Heart left ventricle (tissue), 16 donors: ENCODE measurements at regions of chr2 and their contacts with region 1.

Region 1: DNA sequence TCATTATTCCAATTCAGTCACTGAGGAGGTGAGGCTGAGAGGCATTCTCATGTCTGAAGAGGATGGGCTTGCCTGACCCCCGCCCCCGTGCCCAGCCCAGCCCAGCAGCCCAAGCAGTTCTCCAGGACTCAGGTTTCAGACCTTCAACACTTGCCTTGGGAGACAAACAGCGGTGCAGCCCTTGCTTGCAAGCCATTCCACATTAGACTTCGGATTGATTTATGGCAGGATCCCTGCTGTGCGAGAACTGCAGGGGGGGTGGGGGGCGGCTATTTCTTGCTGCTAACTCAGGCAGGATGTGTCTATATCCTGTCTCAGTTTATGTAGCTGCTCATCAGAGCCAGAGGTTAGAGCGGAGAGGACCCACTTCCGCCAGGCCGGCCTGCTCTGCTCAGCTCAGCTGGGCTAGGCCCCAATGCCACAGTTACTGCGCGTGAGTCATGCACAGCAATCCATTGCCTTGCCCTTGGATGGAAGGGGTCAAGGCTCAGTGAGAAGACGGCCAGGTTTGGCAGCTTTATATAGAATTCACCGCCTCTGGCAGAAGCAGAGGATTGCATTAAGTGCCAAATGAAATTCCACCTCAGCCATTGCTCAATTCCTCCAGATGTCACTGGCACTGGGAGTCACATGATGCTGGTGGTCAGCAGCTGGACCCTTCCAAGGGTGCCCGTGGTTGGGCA is 1.8 kb downstream of the GYPC start:
- DNase-seq: peak; percentile 77 to 95 (median 90)
- ATAC-seq: peak; percentile 62 to 86 (median 79)
- H3K4me3 ChIP-seq: peak overlapping the region; percentile 67 to 94 (median 77)
- H3K27ac ChIP-seq: peak overlapping the region; percentile 96 to 100 (median 98)
- H3K4me1 ChIP-seq: peaks cover 17 to 74% (median 70%) of the 10 kb centered on the region in 12 donors
- H3K27me3 ChIP-seq: no peaks in the 10 kb centered on the region
- CTCF ChIP-seq: peak in 1 of 12 donors; percentile 21
- POLR2A ChIP-seq: peak in 1 of 2 donors; percentile 61

Region 2: DNA sequence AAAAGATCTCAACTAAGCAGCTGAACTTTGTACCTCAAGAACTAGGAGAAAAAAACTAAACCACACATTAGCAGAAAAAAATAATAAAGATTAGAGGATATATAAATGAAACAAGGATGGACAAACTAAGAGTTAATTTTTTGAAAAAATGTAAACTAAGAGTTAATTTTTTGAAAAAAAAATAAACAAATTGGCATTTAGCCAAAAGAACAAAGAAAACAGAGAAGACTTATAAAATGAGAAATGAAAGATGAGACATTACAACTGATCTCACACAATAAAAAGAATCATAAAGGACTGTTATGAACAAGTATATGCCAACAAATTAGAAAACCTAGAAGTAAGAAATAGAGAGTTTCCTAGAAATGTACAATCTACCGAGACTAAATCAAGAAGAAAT is 861.0 kb before region 1 on chr2:
- intact Hi-C with region 1: no loop called
- DNase-seq: no peak
- ATAC-seq: no peak
- H3K4me3 ChIP-seq: no peak overlapping the region
- H3K27ac ChIP-seq: no peak overlapping the region
- H3K4me1 ChIP-seq: no peaks in the 10 kb centered on the region
- H3K27me3 ChIP-seq: no peaks in the 10 kb centered on the region
- CTCF ChIP-seq: no peak
- POLR2A ChIP-seq: no peak

Region 3: GRCh38 chr2:126527836-126528507 is 129.8 kb before region 1 on chr2:
- intact Hi-C with region 1: loop called in 5 of 10 experiments (anchors 2 to 10 kb)
- DNase-seq: peak; percentile 62 to 83 (median 71)
- ATAC-seq: peak in 3 of 4 donors; percentile 71 to 88 (median 84)
- H3K4me3 ChIP-seq: no peak overlapping the region
- H3K27ac ChIP-seq: no peak overlapping the region
- H3K4me1 ChIP-seq: no peaks in the 10 kb centered on the region
- H3K27me3 ChIP-seq: no peaks in the 10 kb centered on the region
- CTCF ChIP-seq: peak; percentile 53 to 79 (median 68)
- POLR2A ChIP-seq: no peak

Region 4: DNA sequence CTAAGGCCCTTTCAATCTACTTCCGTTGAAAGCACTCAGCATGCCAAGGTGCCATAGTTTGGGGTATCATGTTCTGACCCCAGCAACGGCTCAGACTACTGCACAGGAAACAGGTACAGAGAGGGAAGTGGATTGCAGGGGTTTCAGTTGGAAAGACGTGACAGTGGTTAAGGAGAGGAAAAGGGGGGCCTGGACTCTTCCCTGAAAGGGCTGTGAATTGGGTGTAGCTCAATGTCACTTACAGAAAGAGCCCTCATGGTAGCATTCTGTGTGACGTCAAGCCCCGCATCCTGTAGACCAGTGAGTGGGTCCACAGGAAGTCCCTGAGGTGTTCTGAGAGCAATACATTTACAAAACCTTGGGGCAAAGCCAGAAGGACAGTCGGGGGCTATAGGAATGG is 123.3 kb before region 1 on chr2:
- intact Hi-C with region 1: loop called in 6 of 10 experiments (anchors 2 to 10 kb)
- DNase-seq: peak in 4 of 5 donors; percentile 40 to 64 (median 46)
- ATAC-seq: peak; percentile 39 to 97 (median 72)
- H3K4me3 ChIP-seq: no peak overlapping the region
- H3K27ac ChIP-seq: peak overlapping the region in 7 of 12 donors; percentile 37 to 65 (median 39)
- H3K4me1 ChIP-seq: peaks cover 0 to 17% (median 0%) of the 10 kb centered on the region in 12 donors
- H3K27me3 ChIP-seq: no peaks in the 10 kb centered on the region
- CTCF ChIP-seq: no peak
- POLR2A ChIP-seq: no peak

Region 5: GRCh38 chr2:126586317-126586716 is 71.5 kb before region 1 on chr2:
- intact Hi-C with region 1: loop called in 3 of 10 experiments (anchors 2 to 5 kb)
- DNase-seq: peak in 4 of 5 donors; percentile 46 to 59 (median 50)
- ATAC-seq: peak; percentile 84 to 98 (median 90)
- H3K4me3 ChIP-seq: no peak overlapping the region
- H3K27ac ChIP-seq: peak overlapping the region in 11 of 12 donors; percentile 8 to 81 (median 71)
- H3K4me1 ChIP-seq: peaks cover 0 to 14% (median 0%) of the 10 kb centered on the region in 12 donors
- H3K27me3 ChIP-seq: no peaks in the 10 kb centered on the region
- CTCF ChIP-seq: no peak
- POLR2A ChIP-seq: no peak

Region 6: DNA sequence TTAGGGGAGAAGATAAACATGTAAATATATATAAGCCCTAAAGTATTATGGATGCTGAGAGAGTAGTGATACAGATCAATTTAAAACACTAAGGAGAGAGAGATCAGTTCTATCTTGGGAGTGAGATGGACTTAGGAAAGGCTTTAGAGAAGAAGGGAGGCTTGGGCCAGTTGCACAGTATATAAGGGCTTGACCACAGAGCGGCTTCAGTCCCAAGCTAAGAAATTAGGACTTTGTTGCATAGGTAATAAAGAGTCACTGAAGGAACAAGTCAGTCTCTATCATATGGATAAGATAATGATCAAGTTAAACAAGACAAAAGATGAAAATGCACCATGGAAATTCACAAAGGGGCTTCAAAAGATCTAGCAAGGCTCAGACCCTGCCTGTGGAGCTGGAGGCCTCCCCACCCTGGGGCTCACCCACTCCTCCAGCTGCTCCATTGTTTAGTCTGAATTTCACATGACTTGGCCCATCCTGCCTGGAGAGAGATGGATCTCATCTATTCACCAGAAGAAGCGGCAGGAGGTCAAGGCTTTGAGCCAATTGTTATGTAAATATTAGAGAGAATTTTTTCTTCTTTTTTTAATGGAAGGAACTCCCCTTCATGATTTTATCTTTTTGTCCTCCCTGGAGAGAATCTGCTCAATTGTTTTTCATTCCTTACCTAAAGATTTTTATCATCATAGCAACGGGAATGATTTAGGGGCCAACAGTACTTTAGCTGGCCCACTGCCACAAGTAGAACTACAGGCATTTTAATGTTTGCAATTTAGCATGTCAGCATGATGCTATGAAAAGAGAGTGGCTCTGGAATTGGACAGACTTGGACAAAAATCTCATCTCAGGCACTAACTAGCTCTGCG is 42.2 kb after region 1 on chr2:
- intact Hi-C with region 1: loop called in 7 of 10 experiments (anchors 2 to 5 kb)
- DNase-seq: peak in 2 of 5 donors; percentile 41 to 47
- ATAC-seq: peak in 2 of 4 donors; percentile 32 to 77
- H3K4me3 ChIP-seq: no peak overlapping the region
- H3K27ac ChIP-seq: peak overlapping the region in 11 of 12 donors; percentile 12 to 78 (median 64)
- H3K4me1 ChIP-seq: peaks cover 2 to 77% (median 38%) of the 10 kb centered on the region in 12 donors
- H3K27me3 ChIP-seq: no peaks in the 10 kb centered on the region
- CTCF ChIP-seq: no peak
- POLR2A ChIP-seq: no peak

Region 7: DNA sequence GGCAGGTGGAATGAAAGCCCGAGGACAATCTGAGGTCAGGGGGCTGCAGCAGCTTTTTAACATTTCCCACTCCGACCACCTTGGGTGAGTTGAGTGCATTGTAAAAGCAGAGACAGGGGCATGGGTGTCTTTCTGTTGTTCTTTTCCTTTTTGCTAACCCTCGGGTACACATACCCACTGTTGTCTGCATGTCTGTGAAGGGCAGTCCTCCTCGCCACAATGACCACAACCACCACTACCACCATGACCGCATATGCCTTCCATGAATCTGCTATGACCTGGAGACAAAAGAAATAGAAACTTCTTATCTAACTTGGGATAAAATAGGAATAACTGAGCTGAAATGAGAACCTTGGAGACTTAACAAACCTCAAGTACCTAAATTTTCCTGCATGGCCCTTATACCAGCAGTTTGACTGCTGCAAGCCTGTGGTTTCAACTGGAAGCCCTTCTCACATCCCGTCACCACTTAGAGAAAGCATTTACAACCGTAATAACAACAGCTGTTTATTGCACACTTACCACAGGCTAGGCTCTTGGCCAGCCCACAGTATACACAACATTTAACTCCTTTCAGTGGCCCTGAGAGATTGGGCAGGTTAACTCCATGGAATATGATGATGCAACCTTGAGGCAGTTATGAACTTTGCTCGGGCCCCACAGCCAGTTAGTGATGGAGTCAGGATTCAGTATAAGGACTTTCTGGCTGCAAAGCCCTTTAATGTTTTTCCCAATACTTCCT is 78.5 kb after region 1 on chr2:
- intact Hi-C with region 1: loop called in 1 of 10 experiments (anchors 10 kb)
- DNase-seq: no peak
- ATAC-seq: no peak
- H3K4me3 ChIP-seq: no peak overlapping the region
- H3K27ac ChIP-seq: no peak overlapping the region
- H3K4me1 ChIP-seq: peaks cover 0 to 3% (median 0%) of the 10 kb centered on the region in 12 donors
- H3K27me3 ChIP-seq: no peaks in the 10 kb centered on the region
- CTCF ChIP-seq: no peak
- POLR2A ChIP-seq: no peak